T-cell (primary cell): ENCODE measurements at regions of chr3 and their contacts with region 1.

Region 1: GRCh38 chr3:112321867-112322649 is 10.9 kb upstream of the CD200 start:
- DNase-seq: no peak
- ATAC-seq: no peak
- H3K4me3 ChIP-seq: no peak overlapping the region
- H3K4me3 Mint-ChIP-seq: no peak overlapping the region
- H3K27ac ChIP-seq: no peak overlapping the region
- H3K27ac Mint-ChIP-seq: no peak overlapping the region
- H3K4me1 ChIP-seq: no peaks in the 10 kb centered on the region
- H3K4me1 Mint-ChIP-seq: no peaks in the 10 kb centered on the region
- H3K27me3 ChIP-seq: no peaks in the 10 kb centered on the region
- H3K27me3 Mint-ChIP-seq: peaks cover 6 to 7% of the 10 kb centered on the region in 2 donors

Region 2: GRCh38 chr3:112333002-112333380 is 10.9 kb after region 1 on chr3 and contains the start of gene CD200:
- CTCF ChIA-PET with region 1: interaction called, 6 to 21 read pairs
- POLR2A ChIA-PET with region 1: interaction called in 1 of 2 experiments, 6 read pairs
- DNase-seq: peak; percentile 11 to 62 (median 31)
- ATAC-seq: peak; percentile 78 to 82 (median 82)
- H3K4me3 ChIP-seq: peak within 1 kb of the TSS; percentile 66 to 69
- H3K4me3 Mint-ChIP-seq: peak within 1 kb of the TSS; percentile 84 to 91 (median 88)
- H3K27ac ChIP-seq: no peak within 1 kb of the TSS
- H3K27ac Mint-ChIP-seq: peak within 1 kb of the TSS; percentile 51 to 83
- H3K4me1 ChIP-seq: peaks cover 5 to 11% of the 10 kb centered on the region in 2 experiments
- H3K4me1 Mint-ChIP-seq: peaks cover 37 to 42% (median 40%) of the 10 kb centered on the region in 3 donors
- H3K27me3 ChIP-seq: peaks cover 0 to 12% of the 10 kb centered on the region in 2 experiments
- H3K27me3 Mint-ChIP-seq: peaks cover 0 to 2% of the 10 kb centered on the region in 2 donors
- total RNA-seq, gene CD200: 1.3 to 4.6 (median 2.2) TPM

Region 3: DNA sequence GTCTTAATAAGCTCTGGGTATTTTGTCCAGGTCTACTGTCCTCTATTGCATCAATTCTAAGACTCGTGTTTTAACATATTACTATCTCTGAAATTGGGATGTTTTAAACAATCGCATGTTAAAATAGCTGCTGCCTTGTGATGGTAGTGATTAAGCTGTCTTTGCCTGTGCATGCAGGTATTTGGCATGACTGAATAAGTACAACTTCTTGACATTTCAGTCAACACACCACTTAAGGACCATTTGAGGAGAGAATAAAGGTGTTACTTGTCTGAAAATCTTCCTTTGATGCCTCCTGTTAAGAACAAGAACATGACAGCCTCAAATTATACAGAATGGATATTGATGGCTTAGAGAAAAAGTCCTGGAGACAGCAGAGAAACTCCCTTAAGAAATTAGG is 272.8 kb after region 1 on chr3:
- CTCF ChIA-PET with region 1: no interaction called
- POLR2A ChIA-PET with region 1: interaction called in 1 of 2 experiments, 12 read pairs
- DNase-seq: no peak
- ATAC-seq: no peak
- H3K4me3 ChIP-seq: no peak overlapping the region
- H3K4me3 Mint-ChIP-seq: no peak overlapping the region
- H3K27ac ChIP-seq: no peak overlapping the region
- H3K27ac Mint-ChIP-seq: no peak overlapping the region
- H3K4me1 ChIP-seq: no peaks in the 10 kb centered on the region
- H3K4me1 Mint-ChIP-seq: peaks cover 2 to 18% (median 3%) of the 10 kb centered on the region in 3 donors
- H3K27me3 ChIP-seq: no peaks in the 10 kb centered on the region
- H3K27me3 Mint-ChIP-seq: no peaks in the 10 kb centered on the region